ENCODE measurements at regions of chr7 and their contacts with region 1.

Region 1: GRCh38 chr7:140003913-140004382 is 58.8 kb downstream of the PARP12 start:
- DNase-seq: peak; percentile 75
- ATAC-seq: peak; percentile 49
- H3K4me3 ChIP-seq: no peak overlapping the region
- H3K27ac ChIP-seq: no peak overlapping the region
- H3K4me1 ChIP-seq: peaks cover 2% of the 10 kb centered on the region; the same call in 1 of the 2 replicates
- H3K27me3 ChIP-seq: no peaks in the 10 kb centered on the region
- CTCF ChIP-seq: peak; percentile 79
- POLR2A ChIP-seq: no peak
- RAD21 ChIP-seq: peak; percentile 81

Region 2: GRCh38 chr7:139340037-139340807 is 663.7 kb before region 1 on chr7:
- CTCF ChIA-PET with region 1: no interaction called
- POLR2A ChIA-PET with region 1: no interaction called
- dilution Hi-C with region 1: no loop called
- in situ Hi-C with region 1: no loop called
- intact Hi-C with region 1: loop called (anchors 5 kb)
- DNase-seq: peak; percentile 99
- ATAC-seq: peak; percentile 66
- H3K4me3 ChIP-seq: peak overlapping the region; percentile 64
- H3K27ac ChIP-seq: peak overlapping the region; percentile 91
- H3K4me1 ChIP-seq: no peaks in the 10 kb centered on the region; the same call in 1 of the 2 replicates
- H3K27me3 ChIP-seq: no peaks in the 10 kb centered on the region
- CTCF ChIP-seq: peak; percentile 90
- POLR2A ChIP-seq: no peak; the same call in 1 of the 2 replicates
- RAD21 ChIP-seq: no peak; the same call in 1 of the 2 replicates

Region 3: GRCh38 chr7:139494835-139495579 is 508.9 kb before region 1 on chr7:
- CTCF ChIA-PET with region 1: interaction called, 4 read pairs
- POLR2A ChIA-PET with region 1: no interaction called
- dilution Hi-C with region 1: no loop called
- in situ Hi-C with region 1: loop called (anchors 5 kb)
- intact Hi-C with region 1: loop called (anchors 1 kb)
- DNase-seq: no peak
- ATAC-seq: no peak
- H3K4me3 ChIP-seq: no peak overlapping the region
- H3K27ac ChIP-seq: no peak overlapping the region
- H3K4me1 ChIP-seq: no peaks in the 10 kb centered on the region
- H3K27me3 ChIP-seq: peaks cover 56% of the 10 kb centered on the region
- CTCF ChIP-seq: no peak
- POLR2A ChIP-seq: no peak
- RAD21 ChIP-seq: no peak

Region 4: GRCh38 chr7:139602143-139602722 is 401.7 kb before region 1 on chr7:
- CTCF ChIA-PET with region 1: interaction called, 5 read pairs
- POLR2A ChIA-PET with region 1: no interaction called
- dilution Hi-C with region 1: no loop called
- in situ Hi-C with region 1: no loop called
- intact Hi-C with region 1: loop called (anchors 1 kb)
- DNase-seq: peak; percentile 42
- ATAC-seq: peak; percentile 55
- H3K4me3 ChIP-seq: no peak overlapping the region
- H3K27ac ChIP-seq: no peak overlapping the region
- H3K4me1 ChIP-seq: peaks cover 2% of the 10 kb centered on the region; the same call in 1 of the 2 replicates
- H3K27me3 ChIP-seq: no peaks in the 10 kb centered on the region
- CTCF ChIP-seq: peak; percentile 50
- POLR2A ChIP-seq: no peak
- RAD21 ChIP-seq: peak; percentile 55

Region 5: DNA sequence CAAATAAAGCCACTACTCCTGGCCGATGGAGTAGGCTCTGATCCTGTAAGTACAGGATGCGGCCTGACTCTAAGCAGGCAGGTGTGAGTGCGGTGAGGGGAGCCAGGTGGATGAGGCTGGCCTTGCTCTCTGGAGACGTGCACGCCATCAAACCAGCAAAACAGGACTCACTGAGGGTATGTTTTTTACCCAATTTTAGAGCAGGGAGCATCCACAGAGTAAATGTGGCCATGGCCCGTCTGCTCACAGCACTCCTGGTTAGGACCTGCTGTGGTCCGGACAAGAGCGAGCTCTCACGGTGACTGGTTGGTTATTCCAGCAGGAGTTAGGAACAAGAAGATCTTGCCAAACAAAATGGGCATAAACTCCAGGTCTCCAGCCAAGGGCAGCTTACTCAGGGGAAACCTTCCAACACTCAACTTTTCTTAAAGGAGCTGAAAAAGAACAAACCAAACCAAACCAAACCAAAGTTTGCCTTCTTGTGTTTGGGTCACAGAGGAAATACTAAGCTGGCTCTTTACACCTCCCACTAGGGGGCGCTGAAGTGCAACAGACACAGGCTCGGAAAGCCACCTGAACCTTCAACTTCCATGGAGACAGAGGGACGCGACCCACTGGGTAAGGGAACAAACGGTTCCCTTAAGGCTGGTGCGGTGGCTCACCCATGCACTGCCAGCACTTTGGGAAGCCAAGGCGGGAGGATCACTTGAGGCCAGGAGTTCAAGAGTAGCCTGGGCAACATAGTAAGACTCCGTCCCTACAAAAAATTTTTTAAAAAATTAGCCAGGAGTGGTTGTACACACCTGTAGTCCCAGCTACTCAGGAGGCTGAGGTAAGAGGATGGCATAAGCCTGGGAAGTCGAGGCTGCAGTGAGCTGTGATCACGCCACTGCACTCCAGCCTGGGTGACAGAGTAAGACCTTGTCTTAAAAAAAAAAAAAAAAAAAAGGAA is 358.1 kb before region 1 on chr7:
- CTCF ChIA-PET with region 1: interaction called, 17 read pairs
- POLR2A ChIA-PET with region 1: no interaction called
- dilution Hi-C with region 1: no loop called
- in situ Hi-C with region 1: loop called (anchors 10 kb)
- intact Hi-C with region 1: loop called (anchors 1 kb)
- DNase-seq: peak; percentile 80
- ATAC-seq: peak; percentile 63
- H3K4me3 ChIP-seq: no peak overlapping the region
- H3K27ac ChIP-seq: no peak overlapping the region
- H3K4me1 ChIP-seq: peaks cover 12% of the 10 kb centered on the region
- H3K27me3 ChIP-seq: no peaks in the 10 kb centered on the region
- CTCF ChIP-seq: peak; percentile 86
- POLR2A ChIP-seq: no peak
- RAD21 ChIP-seq: peak; percentile 92

Region 6: DNA sequence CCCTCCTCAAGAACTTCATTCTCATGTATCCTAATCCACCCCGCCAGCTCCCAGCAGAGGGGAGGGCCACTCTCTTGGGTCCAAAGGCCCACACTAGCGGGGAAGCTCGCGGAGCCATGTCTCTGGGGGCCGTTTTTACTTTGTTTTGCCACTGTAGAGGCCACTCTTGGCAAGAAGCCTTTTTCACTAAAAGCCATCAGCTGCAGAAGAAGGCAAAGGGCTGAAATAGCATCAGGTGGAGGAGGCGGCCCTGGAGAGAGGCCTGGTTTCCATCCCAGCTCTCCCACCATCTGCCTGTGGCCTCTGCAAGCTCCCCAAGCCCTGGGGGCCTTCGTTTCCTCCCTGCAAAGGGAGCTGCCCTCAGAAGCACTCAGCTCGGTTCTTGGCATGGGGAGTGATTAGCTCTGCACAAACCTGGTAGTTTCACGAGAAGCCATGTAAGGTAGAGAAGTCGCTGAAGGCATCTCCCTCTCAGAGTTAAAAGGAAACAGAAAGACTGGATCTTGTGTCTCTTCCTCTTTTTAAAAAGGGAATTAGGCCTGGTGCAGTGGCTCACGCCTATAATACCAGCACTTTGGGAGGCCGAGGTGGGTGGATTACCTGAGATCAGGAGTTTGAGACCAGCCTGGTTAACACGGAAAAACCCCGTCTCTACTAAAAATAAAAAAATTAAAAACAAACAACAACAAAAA is 11.4 kb before region 1 on chr7:
- CTCF ChIA-PET with region 1: no interaction called
- POLR2A ChIA-PET with region 1: no interaction called
- dilution Hi-C with region 1: no loop called
- in situ Hi-C with region 1: no loop called
- intact Hi-C with region 1: no loop called
- DNase-seq: no peak
- ATAC-seq: no peak
- H3K4me3 ChIP-seq: no peak overlapping the region
- H3K27ac ChIP-seq: no peak overlapping the region
- H3K4me1 ChIP-seq: peaks cover 17% of the 10 kb centered on the region
- H3K27me3 ChIP-seq: no peaks in the 10 kb centered on the region; the same call in 1 of the 2 replicates
- CTCF ChIP-seq: no peak
- POLR2A ChIP-seq: no peak
- RAD21 ChIP-seq: no peak

Region 7: DNA sequence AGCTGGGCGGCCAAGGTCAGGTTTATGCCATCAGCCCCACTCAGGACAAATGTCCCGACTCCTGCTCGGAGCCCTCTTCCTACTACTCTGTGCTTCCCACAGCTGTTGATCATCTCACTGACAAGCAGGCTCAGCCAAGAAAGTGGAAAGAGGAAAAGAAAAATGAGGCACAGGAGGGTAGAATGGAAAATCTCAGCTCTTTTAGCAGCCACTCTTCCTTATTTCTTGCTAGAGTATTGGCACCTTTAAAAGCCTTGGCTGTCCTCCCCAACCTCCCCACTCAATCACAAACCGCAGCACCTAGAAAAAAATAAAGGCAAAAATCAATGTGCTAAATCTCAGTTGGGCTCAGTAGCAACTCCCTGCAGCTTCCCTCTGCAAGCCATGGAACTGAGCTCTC is 1512.0 kb after region 1 on chr7:
- CTCF ChIA-PET with region 1: no interaction called
- POLR2A ChIA-PET with region 1: no interaction called
- dilution Hi-C with region 1: no loop called
- in situ Hi-C with region 1: no loop called
- intact Hi-C with region 1: no loop called
- DNase-seq: no peak
- ATAC-seq: no peak
- H3K4me3 ChIP-seq: no peak overlapping the region
- H3K27ac ChIP-seq: no peak overlapping the region
- H3K4me1 ChIP-seq: no peaks in the 10 kb centered on the region
- H3K27me3 ChIP-seq: peaks cover 14% of the 10 kb centered on the region
- CTCF ChIP-seq: no peak
- POLR2A ChIP-seq: no peak
- RAD21 ChIP-seq: no peak